ENCODE measurements at regions of chr17 and their contacts with region 1.

Region 1: DNA sequence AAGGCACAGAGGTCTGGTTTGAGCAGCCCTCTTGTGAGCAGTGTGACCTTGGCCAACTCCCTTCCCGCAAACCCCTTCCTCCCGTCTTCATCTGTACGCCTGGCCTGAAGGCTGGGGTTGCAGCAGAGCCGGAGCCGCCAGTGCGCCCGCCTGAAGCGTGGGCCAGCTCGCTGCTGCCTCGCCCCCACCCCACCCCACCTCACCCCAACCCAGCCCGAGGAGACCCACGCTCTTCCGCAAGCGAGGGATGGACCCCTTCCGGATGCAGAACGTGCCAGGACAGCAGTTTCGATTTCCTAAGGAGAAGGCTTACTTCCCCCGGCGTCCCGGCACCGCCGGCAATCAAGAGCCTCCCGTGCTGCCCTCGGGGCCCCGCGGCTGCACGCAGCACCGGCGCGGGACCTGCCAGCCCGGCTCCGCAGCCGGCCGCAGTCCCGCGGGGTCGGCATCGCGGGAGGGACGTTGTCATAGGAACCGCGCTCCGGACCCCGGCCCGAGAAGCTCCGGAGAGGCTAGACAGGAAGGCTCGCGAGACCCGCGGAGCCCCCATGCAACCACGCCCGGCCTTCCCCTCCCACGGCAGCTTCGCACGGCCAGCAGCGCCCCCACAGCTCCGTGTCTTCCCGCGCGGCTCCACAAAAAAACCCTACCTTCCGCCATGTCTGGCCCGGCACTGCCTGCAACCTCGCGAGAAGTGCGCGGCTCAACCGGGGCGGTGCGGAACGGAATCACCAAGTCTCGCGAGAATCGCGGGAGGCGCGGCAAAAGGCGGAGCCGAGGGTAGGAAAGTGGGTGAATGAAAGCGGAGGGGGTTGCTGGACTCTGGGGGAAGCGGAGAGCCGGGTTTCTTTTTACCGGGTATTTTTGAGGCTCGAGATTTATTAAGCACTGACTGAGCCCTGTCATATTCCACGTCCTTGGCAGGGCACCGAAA is at the start of gene ANKFY1:
- DNase-seq: peak; percentile 97
- ATAC-seq: peak; percentile 94 to 99 (median 98)
- H3K4me3 ChIP-seq: peak within 1 kb of the TSS; percentile 70 to 94 (median 84)
- H3K27ac ChIP-seq: peak within 1 kb of the TSS; percentile 42 to 74 (median 53)
- H3K4me1 ChIP-seq: peaks cover 0 to 13% (median 4%) of the 10 kb centered on the region in 4 donors
- H3K27me3 ChIP-seq: no peaks in the 10 kb centered on the region
- CTCF ChIP-seq: peak in 1 of 4 donors; percentile 21
- POLR2A ChIP-seq: peak; percentile 44
- total RNA-seq, gene ANKFY1: 21.3 to 34.9 (median 29.5) TPM

Region 2: DNA sequence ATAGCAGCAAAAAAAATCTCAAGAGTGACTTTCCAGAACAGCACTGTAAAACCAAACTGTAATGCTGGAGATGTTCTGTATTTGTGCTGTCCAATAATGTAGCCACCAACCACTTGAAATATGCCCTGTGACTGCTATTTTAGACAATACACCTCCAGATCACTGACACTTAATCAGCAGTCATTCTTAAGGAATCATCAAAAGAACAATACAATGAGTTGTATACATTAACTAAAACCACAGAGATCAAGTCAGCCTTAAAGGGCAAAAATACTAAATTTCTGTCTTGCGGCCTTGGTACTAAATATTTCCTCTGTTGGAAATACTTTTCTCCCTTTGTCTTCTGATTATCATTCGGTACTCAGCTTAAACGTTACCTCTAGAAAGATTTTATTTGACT is 33.8 kb after region 1 on chr17:
- intact Hi-C with region 1: loop called in 1 of 2 experiments (anchors 5 kb)
- DNase-seq: no peak
- ATAC-seq: no peak
- H3K4me3 ChIP-seq: no peak overlapping the region
- H3K27ac ChIP-seq: no peak overlapping the region
- H3K4me1 ChIP-seq: no peaks in the 10 kb centered on the region
- H3K27me3 ChIP-seq: no peaks in the 10 kb centered on the region
- CTCF ChIP-seq: no peak
- POLR2A ChIP-seq: no peak